Posterior vena cava (tissue), 2 donors: ENCODE measurements at regions of chr1 and their contacts with region 1.

Region 1: DNA sequence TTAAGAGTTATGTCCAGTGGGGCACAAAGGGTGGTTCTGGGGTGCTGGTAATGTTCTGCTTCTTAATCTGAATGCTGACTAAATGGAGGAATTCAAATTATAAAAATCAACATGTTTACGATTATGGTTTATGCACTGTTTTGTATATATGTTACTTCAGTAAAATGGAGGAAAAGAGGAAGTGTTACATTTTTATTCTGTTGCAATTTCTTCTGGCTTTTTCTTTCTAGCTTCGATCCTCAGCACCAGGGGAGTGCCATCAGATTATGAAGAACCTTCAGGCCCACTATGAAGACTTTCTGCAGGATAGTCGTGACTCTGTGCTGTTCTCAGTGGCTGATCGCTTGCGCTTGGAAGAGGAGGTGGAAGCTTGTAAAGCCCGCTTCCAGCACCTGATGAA is 105.5 kb downstream of the MACF1 start:
- DNase-seq: no peak

Region 2: DNA sequence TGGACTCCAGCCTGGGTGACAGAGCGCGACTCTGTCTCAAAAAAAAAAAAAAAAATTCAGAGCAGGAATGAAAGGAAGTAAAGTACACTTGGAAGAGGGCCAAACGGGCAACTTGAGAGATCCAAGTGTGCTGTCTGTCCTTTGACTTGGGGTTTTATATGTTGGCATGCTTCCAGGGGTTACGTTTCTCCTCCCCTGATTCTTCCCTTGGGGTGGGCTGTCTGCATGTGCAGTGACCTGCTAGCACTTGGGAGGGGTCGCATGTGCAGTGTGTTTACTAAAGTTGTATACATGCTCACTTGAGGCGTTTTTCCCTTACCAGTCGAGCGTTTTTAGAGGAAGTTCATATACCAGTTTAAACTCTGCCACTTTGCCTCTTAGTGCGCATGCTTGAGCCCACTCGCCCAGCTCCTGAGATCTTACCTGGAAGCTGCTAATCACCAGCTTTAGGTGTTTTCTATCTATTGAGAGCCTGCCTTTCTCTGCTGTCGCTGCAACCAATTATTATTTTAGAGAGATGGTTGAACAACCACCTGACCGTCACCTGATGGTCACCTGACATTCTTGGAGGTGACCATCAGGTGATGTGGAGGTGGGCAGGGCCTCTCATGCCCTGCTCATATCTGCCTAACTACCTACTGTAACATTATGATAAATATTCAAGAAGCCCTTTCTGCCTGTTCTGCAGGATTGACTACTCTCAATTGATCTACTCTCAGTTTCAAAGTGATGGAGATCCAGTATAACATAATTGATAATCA is 34.6 kb after region 1 on chr1:
- intact Hi-C with region 1: no loop called
- DNase-seq: no peak

Region 3: DNA sequence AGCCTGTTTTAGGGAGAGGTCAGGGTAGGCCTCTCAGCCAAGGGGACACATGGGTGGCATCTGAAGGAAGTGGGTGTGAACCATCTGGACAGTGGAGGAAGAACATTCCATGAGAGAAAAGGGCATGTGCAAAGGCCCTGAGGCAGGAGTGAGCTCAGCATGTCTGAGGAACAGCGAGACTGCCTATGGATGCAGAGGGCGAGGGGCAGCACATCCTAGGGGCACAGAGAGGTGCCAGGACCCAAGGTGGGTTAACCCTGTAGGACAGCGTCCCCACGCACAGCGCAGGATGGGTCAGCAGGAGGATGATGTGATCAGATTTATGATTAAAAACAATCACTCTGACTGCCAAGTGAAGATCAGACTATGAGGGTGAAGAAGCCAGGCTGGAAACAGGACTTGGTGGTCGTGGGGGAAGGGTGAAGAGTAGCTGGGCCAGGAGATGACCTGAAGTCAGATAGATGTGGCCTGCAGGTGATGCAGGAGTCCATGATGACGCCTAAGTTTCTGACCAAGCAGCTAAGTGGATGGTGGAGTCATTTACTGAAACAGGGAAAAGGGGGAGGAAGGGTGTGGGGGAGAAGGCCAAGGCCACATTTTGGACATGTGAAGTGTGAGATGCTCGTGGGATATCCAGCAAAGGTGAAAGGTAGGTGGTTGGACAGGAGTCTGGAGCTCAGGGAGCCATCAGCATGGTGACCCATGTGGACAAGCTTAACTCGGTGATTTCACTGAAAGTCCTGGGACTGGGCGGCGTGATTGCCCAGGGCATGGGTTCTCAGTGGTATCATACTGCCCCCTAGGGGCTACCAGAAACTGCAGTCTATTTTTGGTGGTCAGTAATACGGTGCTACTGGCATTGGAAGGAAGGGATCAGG is 228.8 kb after region 1 on chr1:
- intact Hi-C with region 1: loop called in 1 of 2 experiments (anchors 5 kb)
- DNase-seq: peak; percentile 89